Aorta (tissue), 5 donors: ENCODE measurements at regions of chr2 and their contacts with region 1.

Region 1: DNA sequence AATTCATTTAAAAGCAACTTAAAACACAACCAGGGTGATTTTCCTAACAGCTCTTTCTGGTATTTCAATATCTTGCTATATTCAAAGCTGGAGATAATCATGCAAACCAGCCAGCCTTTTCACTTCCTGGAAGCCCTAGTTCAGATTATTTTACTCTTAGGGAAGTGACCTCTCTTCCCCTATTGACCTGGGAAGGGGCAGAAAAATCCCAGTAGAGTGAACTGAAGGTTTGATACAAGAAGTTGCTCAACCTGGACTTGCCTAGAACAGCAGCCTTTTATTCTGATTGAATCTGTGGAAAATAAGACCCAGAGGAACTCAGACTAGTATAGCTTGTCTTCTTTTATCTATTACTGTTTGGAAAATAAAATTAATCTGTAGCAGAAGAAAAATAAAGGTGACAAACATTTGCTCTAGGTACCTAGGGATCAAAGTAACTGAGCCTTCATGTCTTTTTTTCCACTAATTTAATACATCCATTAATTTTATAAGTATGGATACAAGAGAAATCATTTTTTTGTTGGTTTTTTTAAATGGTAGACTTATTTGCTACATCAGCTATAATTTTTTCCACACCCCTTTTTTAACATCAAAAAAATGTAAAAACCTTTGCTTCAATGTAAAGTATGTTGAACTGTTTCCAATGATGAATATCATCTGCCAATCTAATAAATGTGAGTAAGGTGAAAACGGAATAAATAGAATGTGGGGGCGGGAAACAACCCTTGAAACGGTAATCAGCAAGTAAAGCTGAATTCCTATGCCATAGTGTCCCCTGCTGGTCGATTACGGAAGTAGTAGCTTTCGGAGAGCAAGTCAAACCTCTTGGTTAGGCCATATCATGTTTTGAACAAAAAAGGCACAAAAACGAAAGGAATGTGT is 629.9 kb downstream of the NRXN1 start:
- DNase-seq: no peak
- ATAC-seq: no peak
- H3K4me3 ChIP-seq: no peak overlapping the region
- H3K27ac ChIP-seq: no peak overlapping the region
- H3K4me1 ChIP-seq: no peaks in the 10 kb centered on the region
- H3K27me3 ChIP-seq: no peaks in the 10 kb centered on the region

Region 2: DNA sequence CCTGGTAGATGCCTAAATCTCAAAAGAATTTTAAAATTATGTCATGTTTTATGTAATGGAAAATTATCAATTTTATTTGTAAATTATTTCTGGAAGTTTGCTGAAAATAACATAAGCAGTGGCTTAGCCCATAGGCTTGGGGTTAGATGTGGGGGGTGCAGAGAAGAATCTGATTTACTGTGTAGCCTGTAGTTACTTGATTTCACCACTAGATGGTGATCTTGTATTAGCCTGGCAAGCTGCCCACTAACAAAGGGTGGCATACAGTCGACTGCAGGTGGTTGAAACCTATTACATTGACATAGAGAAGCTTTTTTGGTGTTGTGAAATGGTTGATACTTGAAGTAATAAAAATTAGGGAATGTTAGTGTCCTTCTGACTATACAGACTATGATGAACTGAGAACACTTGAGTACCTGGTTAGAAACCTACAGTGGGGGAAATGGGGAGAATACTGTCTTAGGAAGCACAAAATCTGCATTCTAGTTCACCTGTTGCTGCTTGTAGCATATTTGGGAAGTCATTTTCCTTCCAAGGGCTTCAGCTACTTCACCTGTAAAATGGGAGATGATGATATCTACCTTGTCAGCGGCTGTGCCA is 1455.5 kb before region 1 on chr2:
- intact Hi-C with region 1: loop called (anchors 2 to 10 kb)
- DNase-seq: no peak
- ATAC-seq: peak; percentile 88
- H3K4me3 ChIP-seq: no peak overlapping the region
- H3K27ac ChIP-seq: no peak overlapping the region
- H3K4me1 ChIP-seq: peaks cover 5 to 8% of the 10 kb centered on the region in 2 donors
- H3K27me3 ChIP-seq: no peaks in the 10 kb centered on the region

Region 3: GRCh38 chr2:48952143-48952542 is 1449.9 kb before region 1 on chr2:
- intact Hi-C with region 1: loop called (anchors 2 to 10 kb)
- DNase-seq: no peak
- ATAC-seq: no peak
- H3K4me3 ChIP-seq: no peak overlapping the region
- H3K27ac ChIP-seq: no peak overlapping the region
- H3K4me1 ChIP-seq: no peaks in the 10 kb centered on the region
- H3K27me3 ChIP-seq: no peaks in the 10 kb centered on the region

Region 4: GRCh38 chr2:49616800-49617199 is 785.2 kb before region 1 on chr2:
- intact Hi-C with region 1: loop called in 1 of 2 experiments (anchors 10 kb)
- DNase-seq: no peak
- ATAC-seq: no peak
- H3K4me3 ChIP-seq: no peak overlapping the region
- H3K27ac ChIP-seq: no peak overlapping the region
- H3K4me1 ChIP-seq: no peaks in the 10 kb centered on the region
- H3K27me3 ChIP-seq: no peaks in the 10 kb centered on the region

Region 5: GRCh38 chr2:49687918-49688317 is 714.1 kb before region 1 on chr2:
- intact Hi-C with region 1: loop called in 1 of 2 experiments (anchors 10 kb)
- DNase-seq: no peak
- ATAC-seq: no peak
- H3K4me3 ChIP-seq: no peak overlapping the region
- H3K27ac ChIP-seq: no peak overlapping the region
- H3K4me1 ChIP-seq: no peaks in the 10 kb centered on the region
- H3K27me3 ChIP-seq: no peaks in the 10 kb centered on the region

Region 6: GRCh38 chr2:49770919-49771318 is 631.1 kb before region 1 on chr2:
- intact Hi-C with region 1: loop called (anchors 2 to 5 kb)
- DNase-seq: peak; percentile 47 to 79
- ATAC-seq: peak; percentile 58
- H3K4me3 ChIP-seq: no peak overlapping the region
- H3K27ac ChIP-seq: no peak overlapping the region
- H3K4me1 ChIP-seq: no peaks in the 10 kb centered on the region
- H3K27me3 ChIP-seq: no peaks in the 10 kb centered on the region

Region 7: DNA sequence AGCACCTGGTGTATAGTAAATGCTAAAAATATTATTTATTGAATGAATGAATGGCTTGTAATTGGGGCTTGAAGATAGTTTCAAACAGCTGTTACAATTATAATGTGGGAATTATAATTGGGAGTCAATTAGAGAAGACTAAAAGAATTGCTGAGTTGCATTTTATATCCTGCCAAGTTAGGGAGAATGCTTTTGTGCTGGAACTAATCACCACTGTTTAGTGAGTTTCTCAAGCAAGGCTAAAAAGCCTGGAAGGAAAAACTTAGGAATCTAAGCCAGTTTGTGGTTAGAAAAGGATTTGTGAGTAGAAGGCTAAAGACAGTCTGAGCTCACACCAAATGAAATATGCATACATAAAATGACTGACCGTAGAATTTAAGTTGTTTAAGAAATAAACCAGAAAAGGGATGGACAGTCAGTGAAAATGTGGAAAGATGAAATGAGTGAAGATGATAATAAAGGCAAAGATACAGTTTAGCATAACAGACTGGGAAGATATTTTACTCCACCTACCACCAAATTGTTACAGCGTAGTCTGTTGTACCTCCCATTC is 600.0 kb before region 1 on chr2:
- intact Hi-C with region 1: no loop called
- DNase-seq: no peak
- ATAC-seq: no peak
- H3K4me3 ChIP-seq: no peak overlapping the region
- H3K27ac ChIP-seq: no peak overlapping the region
- H3K4me1 ChIP-seq: no peaks in the 10 kb centered on the region
- H3K27me3 ChIP-seq: no peaks in the 10 kb centered on the region

Region 8: GRCh38 chr2:50624506-50624905 is 222.5 kb after region 1 on chr2:
- intact Hi-C with region 1: no loop called
- DNase-seq: no peak
- ATAC-seq: no peak
- H3K4me3 ChIP-seq: no peak overlapping the region
- H3K27ac ChIP-seq: no peak overlapping the region
- H3K4me1 ChIP-seq: no peaks in the 10 kb centered on the region
- H3K27me3 ChIP-seq: no peaks in the 10 kb centered on the region

Region 9: GRCh38 chr2:50691513-50691912 is 289.5 kb after region 1 on chr2:
- intact Hi-C with region 1: no loop called
- DNase-seq: no peak
- ATAC-seq: no peak
- H3K4me3 ChIP-seq: no peak overlapping the region
- H3K27ac ChIP-seq: no peak overlapping the region
- H3K4me1 ChIP-seq: no peaks in the 10 kb centered on the region
- H3K27me3 ChIP-seq: no peaks in the 10 kb centered on the region